BJ (cell line): ENCODE measurements at regions of chr2 and their contacts with region 1.

Region 1: GRCh38 chr2:85288244-85288725 is 39.5 kb downstream of the TGOLN2 start:
- DNase-seq: no peak
- H3K4me3 ChIP-seq: no peak overlapping the region
- H3K27me3 ChIP-seq: no peaks in the 10 kb centered on the region
- CTCF ChIP-seq: no peak

Region 2: GRCh38 chr2:85132834-85133637 is 155.2 kb before region 1 on chr2 and contains the start of gene TCF7L1:
- CTCF ChIA-PET with region 1: interaction called, 115 read pairs
- POLR2A ChIA-PET with region 1: no interaction called
- DNase-seq: peak; percentile 35
- H3K4me3 ChIP-seq: peak within 1 kb of the TSS; percentile 69
- H3K27me3 ChIP-seq: no peaks in the 10 kb centered on the region; the same call in 1 of the 2 replicates
- CTCF ChIP-seq: peak; percentile 96
- polyA plus RNA-seq, gene TCF7L1: 1.9 and 3.2 TPM in 2 replicates

Region 3: GRCh38 chr2:85143463-85144082 is 144.7 kb before region 1 on chr2:
- CTCF ChIA-PET with region 1: interaction called, 11 read pairs
- POLR2A ChIA-PET with region 1: no interaction called
- DNase-seq: no peak
- H3K4me3 ChIP-seq: no peak overlapping the region
- H3K27me3 ChIP-seq: no peaks in the 10 kb centered on the region
- CTCF ChIP-seq: no peak

Region 4: DNA sequence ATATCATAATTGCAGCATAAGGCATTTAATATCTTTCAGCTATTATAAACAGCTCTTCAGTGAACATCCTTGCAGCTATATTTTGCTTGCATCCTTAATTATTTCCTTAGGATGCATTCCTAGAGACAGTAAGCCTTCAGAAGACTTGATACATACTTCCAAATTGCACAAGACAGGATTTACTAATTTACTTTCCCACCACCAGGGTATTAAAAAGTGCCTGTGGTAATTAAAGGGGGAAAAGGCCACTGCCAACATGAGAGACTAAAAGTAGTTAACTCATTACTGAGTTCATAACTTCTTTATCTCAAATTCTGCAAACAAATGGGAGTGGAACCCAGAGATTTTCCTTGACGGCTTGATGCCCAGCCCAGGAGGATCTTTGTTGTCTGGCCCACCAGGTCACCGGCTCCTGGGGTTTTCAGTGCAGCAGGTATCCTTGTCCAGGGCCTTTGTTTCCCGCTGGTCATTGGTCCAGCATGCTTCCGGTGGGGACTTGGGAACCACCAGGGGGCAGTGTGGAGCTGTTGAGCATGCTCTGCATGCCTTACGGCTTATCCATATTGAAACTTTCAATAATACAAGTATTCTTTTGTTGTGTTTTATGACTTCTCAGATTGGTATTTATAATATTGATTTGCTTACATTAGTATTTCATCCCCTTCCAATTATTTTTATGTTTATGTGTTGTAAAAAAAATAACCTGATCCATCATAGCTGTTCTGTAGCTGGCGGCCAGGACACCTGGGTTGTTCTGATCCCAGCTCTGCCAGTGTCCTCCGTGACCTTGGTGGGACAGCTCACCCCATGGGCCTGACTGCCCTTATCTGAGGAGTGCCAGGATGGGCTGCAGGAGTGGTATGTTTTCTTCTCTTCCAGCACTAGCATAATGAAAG is 21.9 kb before region 1 on chr2:
- CTCF ChIA-PET with region 1: interaction called, 11 read pairs
- POLR2A ChIA-PET with region 1: no interaction called
- DNase-seq: no peak
- H3K4me3 ChIP-seq: no peak overlapping the region
- H3K27me3 ChIP-seq: no peaks in the 10 kb centered on the region
- CTCF ChIP-seq: peak; percentile 86